ENCODE measurements at regions of chr20 and their contacts with region 1.

Region 1: GRCh38 chr20:47929363-47930123 is 144.3 kb upstream of the SULF2 start:
- DNase-seq: peak; percentile 56
- H3K4me3 Mint-ChIP-seq: no peak overlapping the region
- H3K27ac Mint-ChIP-seq: peak overlapping the region; percentile 67
- H3K4me1 Mint-ChIP-seq: peaks cover 54% of the 10 kb centered on the region
- H3K27me3 Mint-ChIP-seq: no peaks in the 10 kb centered on the region
- CTCF ChIP-seq: no peak

Region 2: GRCh38 chr20:47725248-47725973 is 204.1 kb before region 1 on chr20:
- CTCF ChIA-PET with region 1: no interaction called
- intact Hi-C with region 1: loop called (anchors 1 kb)
- DNase-seq: peak; percentile 93
- H3K4me3 Mint-ChIP-seq: no peak overlapping the region
- H3K27ac Mint-ChIP-seq: no peak overlapping the region
- H3K4me1 Mint-ChIP-seq: no peaks in the 10 kb centered on the region
- H3K27me3 Mint-ChIP-seq: no peaks in the 10 kb centered on the region
- CTCF ChIP-seq: peak; percentile 95

Region 3: GRCh38 chr20:47874942-47875713 is 54.4 kb before region 1 on chr20:
- CTCF ChIA-PET with region 1: no interaction called
- intact Hi-C with region 1: loop called (anchors 5 kb)
- DNase-seq: no peak
- H3K4me3 Mint-ChIP-seq: no peak overlapping the region
- H3K27ac Mint-ChIP-seq: no peak overlapping the region
- H3K4me1 Mint-ChIP-seq: no peaks in the 10 kb centered on the region
- H3K27me3 Mint-ChIP-seq: peaks cover 29% of the 10 kb centered on the region
- CTCF ChIP-seq: no peak

Measured in Calu3 (cell line).